ENCODE measurements at regions of chr12 and their contacts with region 1.

Region 1: GRCh38 chr12:94372461-94372860 is 87.2 kb downstream of the CEP83 start:
- DNase-seq: no peak
- H3K4me3 Mint-ChIP-seq: peak overlapping the region; percentile 37
- H3K27ac Mint-ChIP-seq: peak overlapping the region; percentile 78
- H3K4me1 Mint-ChIP-seq: peaks cover 58% of the 10 kb centered on the region
- H3K27me3 Mint-ChIP-seq: no peaks in the 10 kb centered on the region

Region 2: GRCh38 chr12:94269316-94269999 is 103.0 kb before region 1 on chr12:
- intact Hi-C with region 1: loop called (anchors 1 kb)
- DNase-seq: no peak
- H3K4me3 Mint-ChIP-seq: peak overlapping the region; percentile 43
- H3K27ac Mint-ChIP-seq: peak overlapping the region; percentile 72
- H3K4me1 Mint-ChIP-seq: peaks cover 72% of the 10 kb centered on the region
- H3K27me3 Mint-ChIP-seq: no peaks in the 10 kb centered on the region

Region 3: GRCh38 chr12:94326727-94327126 is 45.7 kb before region 1 on chr12:
- intact Hi-C with region 1: loop called (anchors 1 kb)
- DNase-seq: no peak
- H3K4me3 Mint-ChIP-seq: no peak overlapping the region
- H3K27ac Mint-ChIP-seq: peak overlapping the region; percentile 51
- H3K4me1 Mint-ChIP-seq: peaks cover 29% of the 10 kb centered on the region
- H3K27me3 Mint-ChIP-seq: no peaks in the 10 kb centered on the region

Region 4: GRCh38 chr12:94353130-94353529 is 19.3 kb before region 1 on chr12:
- intact Hi-C with region 1: loop called (anchors 1 kb)
- DNase-seq: no peak
- H3K4me3 Mint-ChIP-seq: no peak overlapping the region
- H3K27ac Mint-ChIP-seq: peak overlapping the region; percentile 41
- H3K4me1 Mint-ChIP-seq: no peaks in the 10 kb centered on the region
- H3K27me3 Mint-ChIP-seq: no peaks in the 10 kb centered on the region

Region 5: DNA sequence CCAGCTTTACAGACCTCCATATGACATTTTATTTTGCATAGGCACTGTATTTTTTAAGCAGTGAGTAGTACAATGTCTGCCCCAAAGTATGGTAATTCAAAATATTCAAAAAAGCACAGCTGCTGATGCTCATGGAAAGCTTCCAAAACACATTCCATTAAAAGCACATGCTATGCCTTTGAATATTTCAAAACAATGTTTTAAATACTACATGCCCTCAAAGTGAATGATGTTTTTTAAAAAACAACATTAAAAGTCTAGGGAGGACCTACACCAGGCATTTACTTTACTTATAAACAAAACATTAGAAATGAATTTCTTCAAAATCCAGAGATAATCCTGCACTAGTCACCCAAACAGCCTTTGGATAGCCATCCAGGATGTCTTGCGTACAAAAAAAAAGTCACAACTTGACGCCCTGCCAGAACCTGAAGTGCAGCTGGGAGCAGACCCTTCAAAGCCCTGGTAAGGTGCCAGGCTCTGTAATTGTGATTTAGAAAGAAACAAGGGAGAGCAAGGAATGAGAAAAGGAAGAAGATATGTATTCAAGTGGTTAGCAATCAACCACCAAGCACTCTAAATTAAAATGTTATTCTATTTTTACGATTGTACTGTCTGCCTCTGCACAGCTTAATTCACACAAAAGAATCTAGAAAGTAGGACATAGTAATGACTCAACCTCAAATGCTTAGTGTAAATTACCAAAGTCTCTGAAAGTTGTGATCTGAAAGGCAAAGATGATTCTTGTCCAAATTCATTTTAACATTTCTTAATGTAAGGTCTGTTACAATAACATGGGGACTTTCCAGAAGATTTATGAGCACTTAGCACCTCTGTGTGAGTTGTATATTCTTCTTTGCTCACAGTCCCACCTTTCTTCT is 55.3 kb after region 1 on chr12:
- intact Hi-C with region 1: loop called (anchors 2 kb)
- DNase-seq: no peak
- H3K4me3 Mint-ChIP-seq: no peak overlapping the region
- H3K27ac Mint-ChIP-seq: peak overlapping the region; percentile 49
- H3K4me1 Mint-ChIP-seq: peaks cover 18% of the 10 kb centered on the region
- H3K27me3 Mint-ChIP-seq: no peaks in the 10 kb centered on the region

Region 6: GRCh38 chr12:94649349-94650142 is 277.1 kb after region 1 on chr12:
- intact Hi-C with region 1: loop called (anchors 10 kb)
- DNase-seq: peak; percentile 21
- H3K4me3 Mint-ChIP-seq: peak overlapping the region; percentile 80
- H3K27ac Mint-ChIP-seq: peak overlapping the region; percentile 18
- H3K4me1 Mint-ChIP-seq: peaks cover 11% of the 10 kb centered on the region
- H3K27me3 Mint-ChIP-seq: peaks cover 73% of the 10 kb centered on the region

Region 7: DNA sequence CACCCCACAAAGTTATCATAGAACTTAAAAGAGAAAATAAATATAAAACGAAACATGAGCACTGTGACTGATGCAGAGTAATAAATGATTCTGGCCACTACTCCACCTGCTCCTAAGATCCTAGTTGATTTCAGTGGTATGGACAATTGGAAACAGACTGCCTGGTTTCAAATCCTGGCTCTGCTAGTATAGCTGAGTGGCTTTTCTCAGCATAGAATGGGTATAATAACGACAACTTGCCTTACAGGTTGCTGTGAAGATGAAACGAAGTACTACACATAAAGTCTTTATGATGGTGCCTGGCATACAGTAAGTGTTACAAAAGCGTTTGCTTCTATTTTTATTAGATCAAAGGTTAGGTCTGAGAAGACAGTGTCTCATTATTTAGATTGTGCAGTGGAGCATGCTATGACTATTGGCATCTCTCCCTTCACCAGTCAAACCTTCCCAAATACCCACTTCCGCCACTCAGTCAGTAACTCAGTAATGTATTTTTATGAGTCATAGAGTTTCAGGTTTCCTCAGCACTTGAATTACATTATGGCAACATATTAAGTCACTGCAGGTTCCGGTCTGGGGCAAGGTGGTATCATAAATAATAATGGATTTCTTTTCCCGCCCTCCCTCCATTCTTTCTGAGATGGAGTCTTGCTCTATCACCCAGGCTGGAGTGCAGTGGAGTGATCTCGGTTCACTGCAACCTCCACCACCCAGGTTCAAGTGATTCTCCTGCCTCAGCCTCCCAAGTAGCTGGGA is 730.6 kb after region 1 on chr12:
- intact Hi-C with region 1: loop called (anchors 1 kb)
- DNase-seq: peak; percentile 39
- H3K4me3 Mint-ChIP-seq: no peak overlapping the region
- H3K27ac Mint-ChIP-seq: peak overlapping the region; percentile 20
- H3K4me1 Mint-ChIP-seq: peaks cover 10% of the 10 kb centered on the region
- H3K27me3 Mint-ChIP-seq: no peaks in the 10 kb centered on the region

Measured in activated T-helper 1 cell treated with anti-CD3 and anti-CD28 coated beads, Interleukin-12 subunit alpha, Interleukin-12 subunit beta, Interleukin-2, Interleukin-4 antibody, amounts not matched to agents 30 ng/mL and 10 ng/mL and 1 ng/mL, durations not matched to agents 14 hours and 24 hours and 36 hours (primary cell).